Activated CD4-positive, alpha-beta memory T cell treated with anti-CD3 and anti-CD28 coated beads for 36 hours (primary cell): ENCODE measurements at regions of chrX and their contacts with region 1.

Region 1: GRCh38 chrX:22192417-22193060 is 80.2 kb upstream of the CBLL2 start:
- DNase-seq: peak; percentile 62
- H3K4me3 Mint-ChIP-seq: no peak overlapping the region
- H3K27ac Mint-ChIP-seq: no peak overlapping the region
- H3K4me1 Mint-ChIP-seq: peaks cover 3% of the 10 kb centered on the region
- H3K27me3 Mint-ChIP-seq: no peaks in the 10 kb centered on the region

Region 2: GRCh38 chrX:22081475-22082092 is 111.0 kb before region 1 on chrX:
- CTCF ChIA-PET with region 1: interaction called, 3 read pairs
- POLR2A ChIA-PET with region 1: no interaction called
- intact Hi-C with region 1: loop called (anchors 5 kb)
- DNase-seq: peak; percentile 65
- H3K4me3 Mint-ChIP-seq: no peak overlapping the region
- H3K27ac Mint-ChIP-seq: no peak overlapping the region
- H3K4me1 Mint-ChIP-seq: no peaks in the 10 kb centered on the region
- H3K27me3 Mint-ChIP-seq: no peaks in the 10 kb centered on the region